ENCODE measurements at regions of chr1 and their contacts with region 1.

Region 1: DNA sequence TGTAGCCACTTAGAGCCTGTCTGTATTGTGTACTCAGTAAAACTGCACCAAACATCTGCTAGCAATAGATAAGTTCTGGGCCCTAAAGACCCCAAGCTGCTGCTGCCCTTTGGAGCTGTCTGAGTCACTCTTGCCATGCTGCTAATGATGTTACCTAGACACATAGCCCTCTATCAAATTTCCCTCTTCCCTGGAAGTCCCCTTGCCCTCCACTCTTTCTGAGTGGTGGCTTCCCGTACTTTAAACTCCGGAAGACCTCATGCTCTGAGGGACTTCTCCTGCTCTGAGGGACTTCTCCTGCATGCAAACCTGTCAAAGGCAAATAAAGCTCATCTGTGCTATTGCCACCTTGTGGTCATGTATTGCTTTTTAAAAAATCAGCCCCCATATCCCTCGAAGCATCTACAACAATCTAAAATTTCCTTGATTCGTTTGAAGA is 34.0 kb downstream of the FH start:
- DNase-seq: peak; percentile 2
- H3K4me3 ChIP-seq: no peak overlapping the region
- H3K27ac ChIP-seq: no peak overlapping the region
- H3K4me1 ChIP-seq: peaks cover 22% of the 10 kb centered on the region
- H3K27me3 ChIP-seq: no peaks in the 10 kb centered on the region
- CTCF ChIP-seq: peak; percentile 46 to 49

Region 2: DNA sequence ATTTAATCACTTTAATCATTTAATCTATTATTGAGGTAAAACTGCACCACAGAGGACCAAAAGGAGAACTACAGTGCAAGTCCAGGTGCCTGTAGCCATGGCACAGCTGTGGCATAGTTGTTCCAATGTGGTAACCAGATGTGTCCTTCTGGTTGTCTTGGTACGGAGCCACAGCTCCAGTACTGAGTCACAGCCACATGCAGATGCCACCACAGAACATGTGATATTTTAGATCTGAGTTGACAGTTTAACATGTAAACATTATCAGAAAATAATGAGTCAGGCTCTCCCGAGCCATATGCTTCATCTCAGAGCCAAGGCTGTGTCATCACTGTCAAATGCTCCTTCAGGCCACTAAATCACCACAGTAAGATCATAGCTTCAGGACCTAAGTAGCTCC is 72.2 kb before region 1 on chr1:
- CTCF ChIA-PET with region 1: no interaction called
- dilution Hi-C with region 1: no loop called
- in situ Hi-C with region 1: no loop called
- intact Hi-C with region 1: no loop called
- DNase-seq: peak; percentile 54
- H3K4me3 ChIP-seq: no peak overlapping the region
- H3K27ac ChIP-seq: no peak overlapping the region
- H3K4me1 ChIP-seq: peaks cover 5% of the 10 kb centered on the region
- H3K27me3 ChIP-seq: no peaks in the 10 kb centered on the region
- CTCF ChIP-seq: no peak

Region 3: DNA sequence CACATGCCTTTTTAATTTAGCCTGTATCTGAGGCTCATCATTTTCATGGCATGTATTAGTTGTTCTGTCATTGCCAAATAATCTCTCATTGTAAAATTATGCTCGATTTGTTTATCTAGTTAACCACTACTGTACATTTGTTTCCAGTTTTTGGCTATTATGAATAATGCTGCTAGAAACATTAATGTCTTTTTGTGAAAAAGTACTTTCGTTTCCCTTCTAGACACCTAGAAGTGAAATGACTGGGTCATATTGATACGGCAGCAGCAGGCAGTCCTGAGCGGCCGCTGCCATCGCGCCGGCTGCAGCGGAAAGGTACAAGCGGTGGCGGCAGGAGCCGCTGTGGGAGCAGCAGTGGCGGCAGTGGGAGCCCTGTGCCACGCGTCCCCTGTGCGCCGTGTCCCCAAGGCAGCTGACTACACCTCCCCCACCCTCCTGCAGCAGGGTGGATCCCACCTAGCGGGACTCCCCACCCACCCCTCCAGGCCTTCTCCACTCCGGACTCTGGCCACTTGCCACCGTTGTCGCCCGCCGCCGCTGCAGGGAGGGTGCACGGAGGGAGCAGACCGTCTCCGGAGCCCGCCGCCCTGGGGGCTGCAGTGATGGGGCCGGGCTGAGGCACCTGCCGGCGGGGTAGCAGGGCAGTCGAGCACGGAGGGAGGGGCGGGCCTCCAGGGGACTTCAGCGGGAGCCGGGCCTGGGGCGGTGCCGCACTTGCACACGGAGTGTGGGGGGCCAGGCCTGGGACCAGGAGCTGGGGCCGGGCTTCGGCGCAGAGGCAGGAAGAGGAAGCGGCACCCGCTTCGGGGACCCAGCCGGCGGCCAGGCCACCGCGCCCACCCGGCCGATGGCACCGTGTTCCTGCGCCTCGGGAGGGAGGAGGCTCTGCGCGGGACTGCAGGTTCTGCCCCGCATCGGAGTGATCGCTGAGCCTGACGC is 61.8 kb before region 1 on chr1:
- CTCF ChIA-PET with region 1: no interaction called
- dilution Hi-C with region 1: no loop called
- in situ Hi-C with region 1: no loop called
- intact Hi-C with region 1: loop called (anchors 5 kb)
- DNase-seq: no peak
- H3K4me3 ChIP-seq: peak overlapping the region; percentile 40 to 53 (median 51)
- H3K27ac ChIP-seq: no peak overlapping the region
- H3K4me1 ChIP-seq: peaks cover 12% of the 10 kb centered on the region
- H3K27me3 ChIP-seq: peaks cover 2% of the 10 kb centered on the region
- CTCF ChIP-seq: no peak

Measured in mammary epithelial cell (primary cell).